ENCODE measurements at regions of chr1 and their contacts with region 1.

Region 1: DNA sequence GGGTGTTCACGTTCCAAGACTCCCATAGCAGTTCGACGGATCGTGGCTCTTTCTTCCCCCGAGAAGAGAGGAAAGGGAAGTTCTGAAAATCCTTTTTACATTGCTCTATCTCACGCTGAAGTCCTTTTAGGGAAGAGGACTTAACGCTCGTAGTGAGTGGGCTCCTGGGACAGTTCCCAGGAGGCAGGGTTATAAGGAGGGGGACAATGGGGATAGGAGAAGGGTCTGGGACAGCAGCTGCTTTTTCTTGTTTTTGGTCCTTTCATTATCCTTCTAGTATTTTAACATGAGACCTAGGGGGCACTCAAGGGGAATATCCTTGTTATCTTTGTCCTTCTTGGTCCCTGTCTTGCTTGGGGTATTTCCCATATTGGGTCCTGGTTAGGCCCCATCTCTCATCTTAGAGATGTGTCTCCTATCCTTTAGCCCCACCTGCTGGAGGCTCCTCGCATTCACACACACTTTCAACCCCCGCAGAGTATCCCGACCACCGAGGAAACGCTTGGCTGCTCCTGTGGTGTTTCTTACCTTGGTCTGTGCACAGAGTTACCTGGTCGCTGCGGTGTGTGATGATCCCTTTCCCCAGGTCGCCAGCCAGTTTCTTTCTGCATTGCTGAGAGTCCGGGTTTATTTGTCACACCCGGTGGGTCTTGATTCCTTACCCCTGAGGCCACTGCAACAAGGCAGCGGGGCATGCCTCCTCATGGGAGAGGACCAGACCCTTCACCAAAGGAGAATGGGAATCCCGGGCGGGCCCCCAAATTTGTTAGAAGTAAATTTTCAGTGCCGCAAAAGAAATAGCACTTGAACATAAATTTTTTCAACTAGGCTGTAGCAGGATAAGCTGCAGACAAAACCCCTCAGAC is 29.7 kb downstream of the SCCPDH start:
- DNase-seq: peak; percentile 50
- ATAC-seq: peak; percentile 98
- H3K4me3 ChIP-seq: no peak overlapping the region
- H3K27ac ChIP-seq: no peak overlapping the region
- H3K4me1 ChIP-seq: no peaks in the 10 kb centered on the region
- H3K27me3 ChIP-seq: no peaks in the 10 kb centered on the region
- CTCF ChIP-seq: peak; percentile 84
- EP300 ChIP-seq: no peak
- POLR2A ChIP-seq: no peak
- RAD21 ChIP-seq: peak; percentile 87

Region 2: GRCh38 chr1:246497331-246497915 is 256.5 kb before region 1 on chr1:
- CTCF ChIA-PET with region 1: interaction called, 3 read pairs
- POLR2A ChIA-PET with region 1: no interaction called
- in situ Hi-C with region 1: no loop called
- intact Hi-C with region 1: loop called (anchors 1 kb)
- DNase-seq: peak; percentile 72
- ATAC-seq: peak; percentile 23; the same call in 1 of the 3 replicates
- H3K4me3 ChIP-seq: no peak overlapping the region
- H3K27ac ChIP-seq: no peak overlapping the region
- H3K4me1 ChIP-seq: no peaks in the 10 kb centered on the region
- H3K27me3 ChIP-seq: no peaks in the 10 kb centered on the region
- CTCF ChIP-seq: peak; percentile 65
- EP300 ChIP-seq: no peak
- POLR2A ChIP-seq: no peak
- RAD21 ChIP-seq: 0 out of 2 replicates have a peak, but pooled peaks have one; percentile 26

Region 3: GRCh38 chr1:246689409-246690008 is 64.4 kb before region 1 on chr1:
- CTCF ChIA-PET with region 1: interaction called, 24 read pairs
- POLR2A ChIA-PET with region 1: no interaction called
- in situ Hi-C with region 1: no loop called
- intact Hi-C with region 1: loop called (anchors 1 kb)
- DNase-seq: peak; percentile 77
- ATAC-seq: peak; percentile 91
- H3K4me3 ChIP-seq: peak overlapping the region; percentile 37 to 74 (median 69)
- H3K27ac ChIP-seq: no peak overlapping the region
- H3K4me1 ChIP-seq: peaks cover 10% of the 10 kb centered on the region
- H3K27me3 ChIP-seq: peaks cover 0 to 5% of the 10 kb centered on the region in 2 experiments; a peak in 2 of 5 replicates
- CTCF ChIP-seq: peak; percentile 89
- EP300 ChIP-seq: no peak
- POLR2A ChIP-seq: no peak
- RAD21 ChIP-seq: peak; percentile 86

Region 4: GRCh38 chr1:246705368-246705767 is 48.5 kb before region 1 on chr1:
- CTCF ChIA-PET with region 1: no interaction called
- POLR2A ChIA-PET with region 1: no interaction called
- in situ Hi-C with region 1: no loop called
- intact Hi-C with region 1: no loop called
- DNase-seq: no peak
- ATAC-seq: no peak
- H3K4me3 ChIP-seq: no peak overlapping the region
- H3K27ac ChIP-seq: no peak overlapping the region
- H3K4me1 ChIP-seq: peaks cover 41% of the 10 kb centered on the region
- H3K27me3 ChIP-seq: no peaks in the 10 kb centered on the region
- CTCF ChIP-seq: no peak
- EP300 ChIP-seq: no peak
- POLR2A ChIP-seq: no peak
- RAD21 ChIP-seq: no peak

Region 5: DNA sequence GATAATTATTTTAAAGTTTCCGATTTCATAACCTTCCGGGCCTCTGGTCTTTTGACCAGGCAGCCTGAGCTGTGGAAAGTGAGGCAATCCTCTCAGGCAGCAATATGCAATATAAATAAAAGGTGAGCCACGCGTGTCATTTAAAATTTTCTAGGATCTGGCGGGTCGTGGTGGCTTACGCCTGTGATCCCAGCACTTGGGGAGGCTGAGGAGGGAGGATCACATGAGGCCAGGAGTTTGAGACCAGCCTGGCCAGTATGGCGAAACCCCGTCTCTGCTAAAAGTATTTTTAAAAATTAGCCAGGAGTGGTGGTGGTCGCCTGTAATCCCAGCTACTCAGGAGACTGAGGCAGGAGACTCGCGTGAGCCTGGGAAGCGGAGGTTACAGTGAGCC is 254.5 kb after region 1 on chr1:
- CTCF ChIA-PET with region 1: no interaction called
- POLR2A ChIA-PET with region 1: no interaction called
- in situ Hi-C with region 1: no loop called
- intact Hi-C with region 1: no loop called
- DNase-seq: no peak
- ATAC-seq: peak; percentile 5
- H3K4me3 ChIP-seq: peak overlapping the region; percentile 14 to 95 (median 91)
- H3K27ac ChIP-seq: no peak overlapping the region
- H3K4me1 ChIP-seq: peaks cover 30% of the 10 kb centered on the region
- H3K27me3 ChIP-seq: no peaks in the 10 kb centered on the region
- CTCF ChIP-seq: no peak
- EP300 ChIP-seq: no peak
- POLR2A ChIP-seq: no peak
- RAD21 ChIP-seq: no peak

Measured in HepG2 (cell line).